T-cell (primary cell): ENCODE measurements at regions of chr3 and their contacts with region 1.

Region 1: GRCh38 chr3:25782938-25783660 is at the start of gene NGLY1:
- DNase-seq: peak; percentile 65 to 92 (median 79)
- ATAC-seq: peak; percentile 92 to 97 (median 94)
- H3K4me3 ChIP-seq: peak within 1 kb of the TSS; percentile 69 to 96
- H3K4me3 Mint-ChIP-seq: peak within 1 kb of the TSS; percentile 83 to 90 (median 90)
- H3K27ac ChIP-seq: peak within 1 kb of the TSS; percentile 79
- H3K27ac Mint-ChIP-seq: peak within 1 kb of the TSS; percentile 78 to 89
- H3K4me1 ChIP-seq: peaks cover 17 to 26% of the 10 kb centered on the region in 2 experiments
- H3K4me1 Mint-ChIP-seq: peaks cover 44 to 50% (median 50%) of the 10 kb centered on the region in 3 donors
- H3K27me3 ChIP-seq: no peaks in the 10 kb centered on the region
- H3K27me3 Mint-ChIP-seq: no peaks in the 10 kb centered on the region
- total RNA-seq, gene NGLY1: 58.6 to 67.0 (median 61.4) TPM

Region 2: DNA sequence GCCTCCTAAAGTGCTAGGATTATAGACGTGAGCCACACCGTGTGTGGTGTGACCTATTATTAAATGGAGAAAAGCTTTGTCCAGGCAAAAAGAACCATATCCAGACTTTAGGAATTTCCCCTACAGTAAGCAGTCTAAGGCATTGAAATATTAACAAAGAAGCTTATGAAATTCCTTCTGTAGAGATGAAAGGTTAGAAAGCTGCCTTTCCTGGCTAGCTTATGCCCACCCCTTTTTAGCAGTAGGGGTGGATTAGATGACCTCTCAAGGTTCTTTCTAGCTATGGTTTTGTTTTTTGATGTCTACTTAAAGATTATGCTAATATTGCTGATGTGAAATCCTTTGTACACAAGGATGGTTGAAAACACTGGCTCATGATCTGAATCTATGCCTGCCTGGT is 20.7 kb after region 1 on chr3:
- CTCF ChIA-PET with region 1: interaction called in 1 of 2 experiments, 11 read pairs
- POLR2A ChIA-PET with region 1: interaction called in 1 of 2 experiments, 7 read pairs
- DNase-seq: no peak
- ATAC-seq: no peak
- H3K4me3 ChIP-seq: no peak overlapping the region
- H3K4me3 Mint-ChIP-seq: no peak overlapping the region
- H3K27ac ChIP-seq: no peak overlapping the region
- H3K27ac Mint-ChIP-seq: no peak overlapping the region
- H3K4me1 ChIP-seq: no peaks in the 10 kb centered on the region
- H3K4me1 Mint-ChIP-seq: no peaks in the 10 kb centered on the region
- H3K27me3 ChIP-seq: peaks cover 0 to 7% of the 10 kb centered on the region in 2 experiments
- H3K27me3 Mint-ChIP-seq: peaks cover 9 to 10% of the 10 kb centered on the region in 2 donors

Region 3: DNA sequence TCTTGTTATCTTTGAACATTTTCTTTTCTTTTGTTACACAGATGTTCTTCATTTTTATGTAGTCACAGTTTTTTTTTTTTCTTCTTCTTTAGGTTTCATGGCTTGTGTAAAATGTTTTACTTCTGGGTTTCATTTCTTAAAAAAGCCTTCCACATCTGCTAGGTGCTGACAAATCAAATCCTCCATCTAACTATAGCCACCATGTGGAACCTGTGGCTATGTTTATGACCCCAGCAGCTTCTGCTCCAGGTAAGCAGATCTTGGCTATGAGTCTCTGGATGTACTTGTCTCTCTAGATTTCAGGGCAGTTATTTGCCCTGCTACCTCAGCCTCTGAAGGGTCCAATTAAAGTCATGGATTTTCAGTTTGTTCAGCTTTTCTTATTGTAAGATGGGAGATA is 51.2 kb after region 1 on chr3:
- CTCF ChIA-PET with region 1: no interaction called
- POLR2A ChIA-PET with region 1: no interaction called
- DNase-seq: no peak
- ATAC-seq: no peak
- H3K4me3 ChIP-seq: no peak overlapping the region
- H3K4me3 Mint-ChIP-seq: no peak overlapping the region
- H3K27ac ChIP-seq: no peak overlapping the region
- H3K27ac Mint-ChIP-seq: no peak overlapping the region
- H3K4me1 ChIP-seq: no peaks in the 10 kb centered on the region
- H3K4me1 Mint-ChIP-seq: peaks cover 0 to 3% (median 2%) of the 10 kb centered on the region in 3 donors
- H3K27me3 ChIP-seq: peaks cover 0 to 6% of the 10 kb centered on the region in 2 experiments
- H3K27me3 Mint-ChIP-seq: peaks cover 0 to 3% of the 10 kb centered on the region in 2 donors